B cell (primary cell): ENCODE measurements at regions of chr13 and their contacts with region 1.

Region 1: GRCh38 chr13:24922745-24923591 is 159.0 kb downstream of the RNF17 start:
- DNase-seq: peak; percentile 96
- ATAC-seq: peak; percentile 98
- H3K4me3 ChIP-seq: peak overlapping the region; percentile 94 to 96 (median 95)
- H3K4me3 Mint-ChIP-seq: peak overlapping the region; percentile 97
- H3K27ac ChIP-seq: peak overlapping the region; percentile 98
- H3K27ac Mint-ChIP-seq: peak overlapping the region; percentile 99
- H3K4me1 ChIP-seq: peaks cover 5 to 11% of the 10 kb centered on the region in 2 donors
- H3K4me1 Mint-ChIP-seq: peaks cover 15% of the 10 kb centered on the region
- H3K27me3 ChIP-seq: no peaks in the 10 kb centered on the region
- H3K27me3 Mint-ChIP-seq: no peaks in the 10 kb centered on the region
- CTCF ChIP-seq: peak; percentile 16

Region 2: DNA sequence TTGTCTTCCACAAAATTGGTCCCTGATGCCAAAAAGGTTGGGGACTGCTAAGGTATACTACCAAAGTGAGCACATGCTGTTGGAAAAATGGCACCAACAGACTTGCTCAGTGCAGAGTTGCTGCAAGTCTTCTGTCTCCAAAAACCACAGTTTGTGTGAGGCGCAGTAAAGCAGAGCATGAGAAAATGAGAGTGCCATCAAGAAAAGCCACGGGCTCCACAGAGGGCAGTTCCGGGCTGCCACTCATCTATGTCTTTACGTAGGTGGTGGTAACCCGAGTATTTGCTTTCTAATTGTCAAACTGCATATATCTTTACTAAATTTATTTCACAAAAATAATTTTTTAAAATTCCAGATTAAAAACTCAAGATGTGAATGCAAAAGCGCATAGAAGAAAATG is 35.2 kb before region 1 on chr13:
- CTCF ChIA-PET with region 1: no interaction called
- POLR2A ChIA-PET with region 1: no interaction called
- intact Hi-C with region 1: no loop called
- DNase-seq: no peak
- ATAC-seq: peak; percentile 41
- H3K4me3 ChIP-seq: no peak overlapping the region
- H3K4me3 Mint-ChIP-seq: no peak overlapping the region
- H3K27ac ChIP-seq: no peak overlapping the region
- H3K27ac Mint-ChIP-seq: no peak overlapping the region
- H3K4me1 ChIP-seq: peaks cover 0 to 5% of the 10 kb centered on the region in 2 donors
- H3K4me1 Mint-ChIP-seq: peaks cover 16% of the 10 kb centered on the region
- H3K27me3 ChIP-seq: no peaks in the 10 kb centered on the region
- H3K27me3 Mint-ChIP-seq: no peaks in the 10 kb centered on the region
- CTCF ChIP-seq: no peak

Region 3: GRCh38 chr13:25267715-25268114 is 344.7 kb after region 1 on chr13:
- CTCF ChIA-PET with region 1: no interaction called
- POLR2A ChIA-PET with region 1: no interaction called
- intact Hi-C with region 1: no loop called
- DNase-seq: peak; percentile 38
- ATAC-seq: peak; percentile 63
- H3K4me3 ChIP-seq: no peak overlapping the region
- H3K4me3 Mint-ChIP-seq: no peak overlapping the region
- H3K27ac ChIP-seq: no peak overlapping the region
- H3K27ac Mint-ChIP-seq: peak overlapping the region; percentile 43
- H3K4me1 ChIP-seq: no peaks in the 10 kb centered on the region
- H3K4me1 Mint-ChIP-seq: peaks cover 4% of the 10 kb centered on the region
- H3K27me3 ChIP-seq: no peaks in the 10 kb centered on the region
- H3K27me3 Mint-ChIP-seq: no peaks in the 10 kb centered on the region
- CTCF ChIP-seq: no peak

Region 4: DNA sequence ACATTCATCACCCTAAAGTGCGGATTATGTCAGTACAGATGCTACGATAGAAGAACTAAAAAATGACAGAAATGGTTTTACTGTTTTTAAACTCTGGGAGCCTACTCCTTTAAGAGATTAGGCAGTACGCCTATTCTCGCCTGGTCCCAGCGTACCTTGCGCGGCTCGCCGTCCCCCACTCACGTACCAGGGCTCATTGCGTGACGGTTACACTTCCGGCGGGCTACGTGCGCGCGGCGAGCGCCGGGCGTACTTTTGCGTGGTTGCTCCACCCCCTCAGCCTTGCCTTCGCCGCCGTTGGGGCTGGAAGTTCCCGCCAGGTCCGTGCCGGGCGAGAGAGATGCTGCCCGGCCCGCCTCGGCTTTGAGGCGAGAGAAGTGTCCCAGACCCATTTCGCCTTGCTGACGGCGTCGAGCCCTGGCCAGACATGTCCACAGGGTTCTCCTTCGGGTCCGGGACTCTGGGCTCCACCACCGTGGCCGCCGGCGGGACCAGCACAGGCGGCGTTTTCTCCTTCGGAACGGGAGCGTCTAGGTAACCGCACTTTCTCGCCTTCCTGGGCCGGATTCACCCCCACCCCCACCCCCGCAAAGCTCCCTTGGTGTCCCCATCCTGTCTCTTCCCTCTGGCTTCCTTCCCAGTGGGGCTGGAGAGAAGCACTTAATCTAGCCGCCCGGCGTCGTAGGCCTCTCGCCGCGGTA is 378.5 kb after region 1 on chr13 and contains the start of gene NUP58:
- CTCF ChIA-PET with region 1: no interaction called
- POLR2A ChIA-PET with region 1: no interaction called
- intact Hi-C with region 1: loop called (anchors 5 kb)
- DNase-seq: peak; percentile 97
- ATAC-seq: peak; percentile 99
- H3K4me3 ChIP-seq: peak within 1 kb of the TSS; percentile 69 to 94 (median 86)
- H3K4me3 Mint-ChIP-seq: peak within 1 kb of the TSS; percentile 87
- H3K27ac ChIP-seq: peak within 1 kb of the TSS; percentile 90 to 97
- H3K27ac Mint-ChIP-seq: peak within 1 kb of the TSS; percentile 95
- H3K4me1 ChIP-seq: peaks cover 13 to 17% of the 10 kb centered on the region in 2 donors
- H3K4me1 Mint-ChIP-seq: peaks cover 33% of the 10 kb centered on the region
- H3K27me3 ChIP-seq: peaks cover 0 to 20% (median 15%) of the 10 kb centered on the region in 4 experiments
- H3K27me3 Mint-ChIP-seq: peaks cover 17% of the 10 kb centered on the region
- CTCF ChIP-seq: no peak
- total RNA-seq, gene NUP58: 41.0 and 41.7 TPM in 2 replicates

Region 5: GRCh38 chr13:26221721-26222519 is 1299.0 kb after region 1 on chr13 and contains the start of gene RNF6:
- CTCF ChIA-PET with region 1: no interaction called
- POLR2A ChIA-PET with region 1: no interaction called
- intact Hi-C with region 1: loop called (anchors 2 kb)
- DNase-seq: peak; percentile 94
- ATAC-seq: peak; percentile 94
- H3K4me3 ChIP-seq: peak within 1 kb of the TSS; percentile 86 to 99 (median 99)
- H3K4me3 Mint-ChIP-seq: peak within 1 kb of the TSS; percentile 95
- H3K27ac ChIP-seq: peak within 1 kb of the TSS; percentile 94 to 95
- H3K27ac Mint-ChIP-seq: peak within 1 kb of the TSS; percentile 100
- H3K4me1 ChIP-seq: peaks cover 16 to 23% of the 10 kb centered on the region in 2 donors
- H3K4me1 Mint-ChIP-seq: peaks cover 30% of the 10 kb centered on the region
- H3K27me3 ChIP-seq: no peaks in the 10 kb centered on the region
- H3K27me3 Mint-ChIP-seq: no peaks in the 10 kb centered on the region
- CTCF ChIP-seq: no peak
- total RNA-seq, gene RNF6: 46.8 and 52.4 TPM in 2 replicates

Region 6: DNA sequence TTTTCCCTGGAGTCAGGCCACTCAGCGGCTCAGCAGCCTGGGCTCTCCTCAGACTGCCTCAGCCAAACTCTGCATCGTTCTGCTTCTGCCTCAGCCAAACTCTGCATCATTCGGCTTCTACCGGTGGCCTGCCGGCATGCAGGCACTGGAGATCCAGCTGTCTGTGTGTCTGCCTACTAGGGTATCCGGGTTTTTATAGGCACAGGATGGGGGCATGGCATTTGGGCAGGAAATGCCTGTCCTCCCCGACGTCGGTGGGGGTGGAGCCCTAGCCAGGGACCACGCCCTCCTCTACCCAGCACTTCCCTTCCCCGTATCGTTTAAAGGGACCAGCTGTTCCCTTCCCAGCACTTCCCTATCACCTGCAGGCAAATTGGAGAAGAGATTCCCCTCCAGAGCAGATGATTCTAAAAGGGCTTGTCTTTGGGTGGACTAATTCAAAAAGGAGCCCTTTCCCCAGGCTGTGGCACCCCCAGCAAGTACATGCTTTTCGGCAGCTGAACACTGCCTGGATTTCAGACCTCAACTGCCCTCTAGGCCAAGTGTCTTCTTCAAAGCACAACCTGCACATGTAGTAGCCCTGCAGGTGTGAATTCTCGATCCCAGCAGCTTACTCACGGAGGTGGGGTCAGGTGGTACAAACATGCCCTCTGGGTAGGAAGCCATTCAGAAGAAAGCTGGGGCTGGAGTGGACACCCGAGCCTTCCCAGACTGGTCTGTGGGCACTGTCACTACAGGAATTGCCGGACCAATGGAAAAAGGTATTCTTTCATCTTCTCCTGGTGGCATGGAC is 1863.1 kb after region 1 on chr13:
- CTCF ChIA-PET with region 1: no interaction called
- POLR2A ChIA-PET with region 1: no interaction called
- intact Hi-C with region 1: loop called (anchors 10 kb)
- DNase-seq: peak; percentile 77
- ATAC-seq: peak; percentile 62
- H3K4me3 ChIP-seq: peak overlapping the region; percentile 51 to 77 (median 64)
- H3K4me3 Mint-ChIP-seq: peak overlapping the region; percentile 93
- H3K27ac ChIP-seq: peak overlapping the region; percentile 68 to 87
- H3K27ac Mint-ChIP-seq: peak overlapping the region; percentile 90
- H3K4me1 ChIP-seq: peaks cover 15 to 23% of the 10 kb centered on the region in 2 donors
- H3K4me1 Mint-ChIP-seq: peaks cover 23% of the 10 kb centered on the region
- H3K27me3 ChIP-seq: peaks cover 0 to 5% (median 3%) of the 10 kb centered on the region in 4 experiments
- H3K27me3 Mint-ChIP-seq: peaks cover 12% of the 10 kb centered on the region
- CTCF ChIP-seq: no peak